A549 (cell line): ENCODE measurements at regions of chr10 and their contacts with region 1.

Region 1: DNA sequence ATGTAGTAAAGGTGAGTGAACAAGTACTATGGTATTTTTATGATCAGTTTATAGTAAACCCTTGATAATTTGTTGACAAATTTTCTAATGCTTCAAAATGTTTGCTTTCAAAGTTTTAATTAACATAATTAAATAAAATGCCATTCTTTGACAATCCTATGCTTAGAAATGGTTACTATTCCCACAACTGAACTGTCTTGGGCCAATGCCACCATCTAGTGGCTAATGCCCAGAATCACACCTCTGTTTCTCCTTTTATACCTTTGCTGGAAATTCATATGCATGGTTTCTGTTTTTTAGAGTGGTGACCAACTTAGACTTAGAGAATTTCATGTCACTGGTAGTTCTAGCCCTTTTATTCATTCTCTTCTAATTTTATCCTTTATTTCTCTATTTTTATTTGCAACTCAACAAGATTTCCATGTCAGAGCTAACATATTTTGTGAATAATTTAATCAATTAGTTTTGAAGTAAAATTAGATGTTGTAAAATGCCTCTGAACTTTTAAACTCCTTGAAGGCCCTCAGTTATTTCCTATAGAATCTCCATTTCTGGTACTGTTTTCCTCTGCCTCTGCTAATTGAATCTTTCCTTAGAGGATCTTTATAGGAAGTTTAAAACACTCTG is 31.1 kb downstream of the PCGF5 start:
- DNase-seq: peak; percentile 40 to 56
- ATAC-seq: peak; percentile 59 to 70; a peak in 3 of 6 replicates
- H3K4me3 ChIP-seq: no peak overlapping the region
- H3K27ac ChIP-seq: no peak overlapping the region
- H3K4me1 ChIP-seq: peaks cover 5% of the 10 kb centered on the region; the same call in 1 of the 3 replicates
- CTCF ChIP-seq: peak; percentile 97
- EP300 ChIP-seq: no peak
- POLR2A ChIP-seq: no peak
- RAD21 ChIP-seq: peak; percentile 97

Region 2: GRCh38 chr10:90885176-90885575 is 366.4 kb before region 1 on chr10:
- CTCF ChIA-PET with region 1: interaction called, 13 read pairs
- POLR2A ChIA-PET with region 1: no interaction called
- DNase-seq: no peak
- ATAC-seq: no peak
- H3K4me3 ChIP-seq: no peak overlapping the region
- H3K27ac ChIP-seq: no peak overlapping the region
- H3K4me1 ChIP-seq: 0 out of 3 replicates have a peak, but pooled peaks cover 4% of the 10 kb centered on the region
- CTCF ChIP-seq: no peak
- EP300 ChIP-seq: no peak
- POLR2A ChIP-seq: no peak
- RAD21 ChIP-seq: no peak

Region 3: DNA sequence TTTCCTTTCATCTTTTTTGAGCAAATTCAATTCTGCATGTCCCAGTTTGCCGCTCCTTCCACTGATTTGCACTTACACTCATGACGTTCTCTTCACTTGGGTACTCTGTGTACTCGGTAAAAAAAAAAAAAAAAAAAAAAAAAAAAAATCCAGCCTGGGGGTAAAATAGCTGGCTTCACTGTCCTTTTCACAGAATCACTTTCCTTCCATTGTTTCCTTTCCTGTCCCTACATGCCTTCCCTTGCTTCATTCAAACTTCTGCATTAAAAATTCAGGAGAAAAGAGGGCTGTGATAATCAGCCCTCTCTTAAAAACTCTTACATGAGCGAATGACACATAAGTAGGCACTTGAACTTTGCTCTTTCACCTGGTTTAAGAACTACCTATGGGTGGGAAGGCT is 339.4 kb before region 1 on chr10:
- CTCF ChIA-PET with region 1: interaction called, 57 read pairs
- POLR2A ChIA-PET with region 1: no interaction called
- DNase-seq: no peak
- ATAC-seq: no peak
- H3K4me3 ChIP-seq: no peak overlapping the region
- H3K27ac ChIP-seq: peak overlapping the region; percentile 29 to 36; a peak in 3 of 6 replicates
- H3K4me1 ChIP-seq: peaks cover 11% of the 10 kb centered on the region; the same call in 2 of the 3 replicates
- CTCF ChIP-seq: no peak
- EP300 ChIP-seq: no peak
- POLR2A ChIP-seq: no peak
- RAD21 ChIP-seq: no peak

Region 4: DNA sequence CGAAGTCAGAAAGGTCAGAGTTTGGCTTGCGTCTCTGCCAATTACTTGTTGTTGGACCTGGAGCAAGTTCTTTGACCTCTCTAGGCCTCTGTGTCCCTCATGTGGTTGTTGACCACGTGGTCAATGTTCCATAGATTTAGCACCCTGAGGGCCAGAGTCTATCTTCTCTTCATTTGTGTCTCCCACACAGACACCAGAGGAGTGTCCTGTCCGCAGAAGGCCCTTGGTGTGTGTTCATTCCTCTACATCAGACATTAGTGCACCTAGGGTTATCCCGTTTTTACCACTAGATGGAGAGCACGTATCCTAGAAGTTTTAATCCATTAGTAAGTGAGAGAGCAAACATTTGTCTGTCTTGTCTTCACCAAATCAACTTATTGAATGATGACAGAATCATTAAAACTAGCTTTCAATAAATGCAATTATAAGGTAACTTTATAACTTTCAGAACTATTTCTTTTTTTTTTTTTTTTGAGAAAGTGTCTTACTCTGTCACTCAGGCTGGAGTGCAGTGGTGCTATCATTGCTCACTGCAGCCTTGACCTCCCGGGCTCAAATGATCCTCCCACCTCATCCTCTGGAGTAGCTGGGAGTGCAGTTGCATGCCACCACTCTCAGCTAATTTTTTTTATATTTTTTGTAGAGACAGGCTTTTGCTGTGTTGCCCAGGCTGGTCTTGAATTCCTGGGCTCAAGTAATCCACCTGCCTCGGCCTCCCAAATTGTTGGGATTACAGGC is 208.2 kb before region 1 on chr10:
- CTCF ChIA-PET with region 1: interaction called, 53 read pairs
- POLR2A ChIA-PET with region 1: no interaction called
- DNase-seq: peak; percentile 25 to 53
- ATAC-seq: peak; percentile 94 to 97
- H3K4me3 ChIP-seq: no peak overlapping the region
- H3K27ac ChIP-seq: no peak overlapping the region; a peak in 1 of 6 replicates
- H3K4me1 ChIP-seq: no peaks in the 10 kb centered on the region
- CTCF ChIP-seq: peak; percentile 66
- EP300 ChIP-seq: no peak
- POLR2A ChIP-seq: no peak
- RAD21 ChIP-seq: peak; percentile 67 to 77

Region 5: DNA sequence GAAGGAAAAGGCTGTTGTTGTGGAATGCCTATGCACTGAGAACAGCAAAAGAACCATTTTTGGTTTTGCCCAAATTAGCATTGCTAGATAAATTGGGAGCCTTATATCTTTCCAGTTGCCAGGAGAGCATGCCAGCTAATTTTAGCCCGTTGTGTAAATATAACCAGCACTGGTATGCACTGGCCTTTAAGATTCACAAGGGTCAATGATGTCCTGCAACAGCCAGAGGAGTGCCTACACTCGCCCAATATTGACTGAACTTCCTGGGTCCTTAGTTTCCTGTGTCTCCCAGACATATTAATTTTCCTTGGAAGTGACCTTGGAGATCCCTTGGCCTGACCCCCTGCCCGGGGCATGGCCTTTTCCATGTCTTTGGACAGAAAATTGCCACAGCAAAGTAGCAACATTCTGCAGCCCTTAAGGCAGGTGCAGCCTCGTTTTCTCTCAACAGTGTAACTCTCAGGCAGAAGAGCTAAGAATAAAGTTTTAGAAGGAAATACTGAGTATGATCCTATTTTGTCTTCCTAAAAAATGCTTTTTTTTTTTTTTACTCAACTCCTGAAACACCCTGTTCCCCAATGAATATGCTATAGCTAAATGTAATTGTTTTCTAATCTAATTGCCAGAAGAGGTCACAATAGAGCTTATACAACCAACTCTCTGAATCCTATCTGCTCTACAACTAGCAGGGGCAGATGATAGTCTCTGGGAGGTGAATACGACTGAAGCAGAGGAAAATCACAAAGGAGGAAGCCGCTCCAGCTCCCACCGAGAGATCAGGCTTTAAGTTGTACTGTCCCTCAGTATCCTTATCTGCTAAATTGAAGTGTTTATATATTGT is 163.0 kb before region 1 on chr10:
- CTCF ChIA-PET with region 1: interaction called, 28 read pairs
- POLR2A ChIA-PET with region 1: interaction called, 4 read pairs
- DNase-seq: peak; percentile 19 to 23
- ATAC-seq: peak; percentile 54 to 81; a peak in 3 of 6 replicates
- H3K4me3 ChIP-seq: no peak overlapping the region
- H3K27ac ChIP-seq: no peak overlapping the region
- H3K4me1 ChIP-seq: no peaks in the 10 kb centered on the region
- CTCF ChIP-seq: peak; percentile 41
- EP300 ChIP-seq: no peak
- POLR2A ChIP-seq: no peak
- RAD21 ChIP-seq: peak; percentile 39 to 47; a peak in 4 of 5 replicates

Region 6: GRCh38 chr10:91444211-91445182 is 193.0 kb after region 1 on chr10:
- CTCF ChIA-PET with region 1: no interaction called
- POLR2A ChIA-PET with region 1: no interaction called
- DNase-seq: no peak
- ATAC-seq: no peak
- H3K4me3 ChIP-seq: no peak overlapping the region
- H3K27ac ChIP-seq: no peak overlapping the region
- H3K4me1 ChIP-seq: no peaks in the 10 kb centered on the region
- CTCF ChIP-seq: no peak
- EP300 ChIP-seq: no peak
- POLR2A ChIP-seq: no peak
- RAD21 ChIP-seq: no peak